Heart right ventricle (tissue), 16 donors: ENCODE measurements at regions of chr9 and their contacts with region 1.

Region 1: GRCh38 chr9:89522261-89522958 is 24.5 kb upstream of the SEMA4D start:
- DNase-seq: peak in 1 of 2 donors; percentile 26
- ATAC-seq: peak in 6 of 8 donors; percentile 32 to 51 (median 44)
- H3K4me3 ChIP-seq: no peak overlapping the region
- H3K27ac ChIP-seq: peak overlapping the region in 2 of 10 donors; percentile 4 to 88
- H3K4me1 ChIP-seq: peaks cover 0 to 85% (median 0%) of the 10 kb centered on the region in 9 donors
- H3K27me3 ChIP-seq: no peaks in the 10 kb centered on the region
- CTCF ChIP-seq: no peak

Region 2: GRCh38 chr9:89395931-89396710 is 126.3 kb before region 1 on chr9:
- intact Hi-C with region 1: loop called in 2 of 10 experiments (anchors 10 kb)
- DNase-seq: no peak
- ATAC-seq: no peak
- H3K4me3 ChIP-seq: no peak overlapping the region
- H3K27ac ChIP-seq: no peak overlapping the region
- H3K4me1 ChIP-seq: peaks cover 0 to 31% (median 0%) of the 10 kb centered on the region in 9 donors
- H3K27me3 ChIP-seq: no peaks in the 10 kb centered on the region
- CTCF ChIP-seq: no peak

Region 3: DNA sequence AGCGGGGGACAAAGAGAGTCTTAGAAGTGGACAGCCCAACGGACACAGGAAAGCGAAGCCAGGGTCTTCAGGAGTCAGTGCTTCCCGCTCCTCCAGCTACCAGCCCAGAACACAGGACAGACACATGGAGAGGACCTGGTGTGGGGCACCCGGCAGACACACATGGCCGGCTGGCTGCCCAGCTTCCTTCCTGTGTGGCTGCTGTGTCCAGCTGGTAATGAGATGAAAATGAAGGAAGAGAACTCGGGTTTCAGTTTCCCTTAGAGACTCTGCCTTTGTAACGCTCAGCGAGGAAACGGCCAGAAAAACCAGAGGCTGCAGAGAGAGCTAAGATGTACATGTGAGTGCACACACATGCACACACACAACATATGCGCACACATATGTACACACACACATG is 116.6 kb before region 1 on chr9:
- intact Hi-C with region 1: loop called in 1 of 10 experiments (anchors 10 kb)
- DNase-seq: peak; percentile 39 to 40
- ATAC-seq: peak in 7 of 8 donors; percentile 47 to 76 (median 63)
- H3K4me3 ChIP-seq: peak overlapping the region in 5 of 10 donors; percentile 11 to 33 (median 30)
- H3K27ac ChIP-seq: peak overlapping the region in 2 of 10 donors; percentile 48 to 80
- H3K4me1 ChIP-seq: peaks cover 0 to 70% (median 9%) of the 10 kb centered on the region in 9 donors
- H3K27me3 ChIP-seq: no peaks in the 10 kb centered on the region
- CTCF ChIP-seq: no peak